ENCODE measurements at regions of chr11 and their contacts with region 1.

Region 1: GRCh38 chr11:10285148-10285802 is 8.7 kb downstream of the SBF2 start:
- DNase-seq: no peak
- H3K27ac ChIP-seq: no peak overlapping the region
- CTCF ChIP-seq: no peak

Region 2: DNA sequence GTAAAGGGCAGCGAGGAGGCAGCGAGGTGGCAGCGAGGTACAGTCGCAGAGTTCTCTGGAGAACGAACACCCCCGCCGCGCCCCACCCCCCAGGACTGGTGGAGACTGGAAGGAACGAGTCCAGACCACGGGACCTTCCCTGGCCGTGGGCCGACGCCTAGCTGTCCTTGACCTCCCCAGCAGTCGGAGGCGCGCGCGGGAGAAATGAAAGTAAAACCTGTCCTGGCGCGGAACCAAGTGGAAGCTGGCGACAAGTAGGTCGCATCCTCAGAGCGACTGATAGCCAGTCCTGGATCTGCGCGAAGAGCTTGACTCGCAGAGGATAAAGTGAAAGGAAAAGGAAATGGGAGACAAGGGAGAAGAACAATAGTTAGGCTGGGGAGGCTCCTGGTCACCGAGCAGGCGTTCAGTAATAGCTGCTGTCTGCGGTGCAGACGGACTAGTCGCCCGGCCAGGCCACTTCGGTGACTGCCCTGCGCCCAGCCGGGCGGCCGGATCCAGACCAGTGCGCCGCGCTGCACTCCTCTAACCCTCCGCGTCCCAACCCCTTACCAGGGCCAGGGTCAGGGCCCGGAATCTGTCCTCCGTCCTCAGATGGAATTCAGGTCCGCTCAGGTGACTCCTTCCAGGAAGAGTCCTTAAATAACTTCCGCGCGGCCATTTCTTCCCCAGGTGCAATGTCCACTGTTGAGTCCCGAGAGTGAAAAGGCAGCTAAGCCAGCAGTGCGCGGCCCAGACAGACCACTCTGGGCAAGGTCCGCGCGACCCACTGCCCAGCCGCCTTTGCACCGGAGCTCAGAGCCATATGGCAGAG is 17.7 kb after region 1 on chr11:
- CTCF ChIA-PET with region 1: interaction called, 3 read pairs
- POLR2A ChIA-PET with region 1: interaction called, 10 read pairs
- DNase-seq: peak; percentile 34
- H3K27ac ChIP-seq: peak overlapping the region; percentile 94
- CTCF ChIP-seq: no peak

Measured in RWPE1 (cell line).